ENCODE measurements at regions of chr20 and their contacts with region 1.

Region 1: GRCh38 chr20:41339507-41340326 is 904 bp upstream of the LPIN3 start:
- DNase-seq: peak; percentile 60 to 71
- ATAC-seq: peak; percentile 73 to 74
- H3K4me3 ChIP-seq: peak overlapping the region; percentile 23 to 52 (median 40)
- H3K27ac ChIP-seq: peak overlapping the region; percentile 65 to 77 (median 70)
- H3K4me1 ChIP-seq: peaks cover 6 to 8% of the 10 kb centered on the region in 2 donors
- H3K27me3 ChIP-seq: no peaks in the 10 kb centered on the region
- CTCF ChIP-seq: peak; percentile 98 to 100 (median 99)
- POLR2A ChIP-seq: no peak

Region 2: DNA sequence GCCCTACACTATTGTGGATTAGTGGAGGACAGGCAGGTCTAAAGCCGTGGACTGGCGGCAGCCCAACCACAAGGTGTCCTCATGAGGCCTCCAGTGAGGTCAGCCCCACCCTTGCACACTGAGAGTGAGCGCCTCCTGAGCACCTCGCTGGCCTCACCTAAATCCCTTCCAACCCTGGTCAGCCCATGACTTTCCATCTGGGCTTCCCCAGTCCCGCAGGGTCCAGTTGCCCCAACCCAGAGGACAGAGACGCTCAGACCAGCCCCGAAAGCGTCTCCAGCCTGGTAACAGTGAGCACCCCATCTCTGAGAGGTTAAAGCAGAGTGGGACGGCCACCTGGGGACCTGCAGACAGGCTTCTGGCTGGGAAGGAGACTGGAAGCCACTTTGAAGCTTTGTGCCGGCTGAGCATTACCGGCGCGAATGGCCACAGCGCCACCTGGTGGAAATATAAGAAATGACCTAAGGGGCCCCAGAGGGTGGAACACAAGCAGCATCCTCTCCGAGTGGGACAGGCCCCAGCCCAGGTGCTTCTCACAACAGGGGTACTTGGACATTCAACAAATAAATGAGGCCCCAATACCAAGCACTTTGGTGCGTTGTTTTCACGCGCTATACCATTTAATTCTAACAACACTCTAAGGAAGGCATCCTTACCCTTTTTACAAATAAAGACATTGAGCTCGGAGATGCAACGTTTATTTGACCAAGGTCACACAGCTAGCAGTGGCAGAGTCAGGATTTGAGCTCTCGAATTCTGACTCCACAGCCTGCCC is 376.8 kb before region 1 on chr20:
- in situ Hi-C with region 1: no loop called
- intact Hi-C with region 1: loop called (anchors 5 kb)
- DNase-seq: peak; percentile 18 to 48
- ATAC-seq: peak; percentile 73 to 92
- H3K4me3 ChIP-seq: no peak overlapping the region
- H3K27ac ChIP-seq: no peak overlapping the region
- H3K4me1 ChIP-seq: no peaks in the 10 kb centered on the region
- H3K27me3 ChIP-seq: no peaks in the 10 kb centered on the region
- CTCF ChIP-seq: peak; percentile 74 to 92 (median 83)
- POLR2A ChIP-seq: no peak

Region 3: DNA sequence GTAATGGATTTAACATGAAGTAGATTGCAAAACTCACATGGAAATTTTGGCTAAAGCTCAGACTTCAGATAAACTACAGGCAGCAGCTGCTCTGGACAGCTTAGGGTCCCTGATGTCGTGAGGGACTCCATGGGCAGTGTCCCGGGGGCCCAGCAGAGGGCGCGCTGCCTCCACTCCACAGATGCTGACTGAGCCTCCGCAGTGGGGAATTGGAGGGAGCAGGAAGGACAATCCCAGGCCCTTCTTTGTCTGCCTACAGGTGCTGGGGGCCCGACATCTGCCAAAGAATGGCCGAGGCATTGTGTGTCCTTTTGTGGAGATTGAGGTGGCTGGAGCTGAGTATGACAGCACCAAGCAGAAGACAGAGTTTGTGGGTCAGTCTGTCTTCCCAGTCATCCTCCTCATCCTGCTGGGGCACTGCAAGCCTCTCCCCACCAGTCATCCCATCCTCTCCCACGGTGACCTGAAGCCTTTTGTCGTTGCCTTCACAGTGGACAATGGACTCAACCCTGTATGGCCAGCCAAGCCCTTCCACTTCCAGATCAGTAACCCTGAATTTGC is 166.5 kb before region 1 on chr20:
- in situ Hi-C with region 1: loop called (anchors 5 kb)
- intact Hi-C with region 1: loop called (anchors 1 kb)
- DNase-seq: peak; percentile 73 to 83
- ATAC-seq: peak; percentile 85 to 88
- H3K4me3 ChIP-seq: no peak overlapping the region
- H3K27ac ChIP-seq: peak overlapping the region; percentile 68 to 80 (median 76)
- H3K4me1 ChIP-seq: peaks cover 59 to 65% of the 10 kb centered on the region in 2 donors
- H3K27me3 ChIP-seq: no peaks in the 10 kb centered on the region
- CTCF ChIP-seq: peak; percentile 96 to 98 (median 97)
- POLR2A ChIP-seq: no peak

Region 4: DNA sequence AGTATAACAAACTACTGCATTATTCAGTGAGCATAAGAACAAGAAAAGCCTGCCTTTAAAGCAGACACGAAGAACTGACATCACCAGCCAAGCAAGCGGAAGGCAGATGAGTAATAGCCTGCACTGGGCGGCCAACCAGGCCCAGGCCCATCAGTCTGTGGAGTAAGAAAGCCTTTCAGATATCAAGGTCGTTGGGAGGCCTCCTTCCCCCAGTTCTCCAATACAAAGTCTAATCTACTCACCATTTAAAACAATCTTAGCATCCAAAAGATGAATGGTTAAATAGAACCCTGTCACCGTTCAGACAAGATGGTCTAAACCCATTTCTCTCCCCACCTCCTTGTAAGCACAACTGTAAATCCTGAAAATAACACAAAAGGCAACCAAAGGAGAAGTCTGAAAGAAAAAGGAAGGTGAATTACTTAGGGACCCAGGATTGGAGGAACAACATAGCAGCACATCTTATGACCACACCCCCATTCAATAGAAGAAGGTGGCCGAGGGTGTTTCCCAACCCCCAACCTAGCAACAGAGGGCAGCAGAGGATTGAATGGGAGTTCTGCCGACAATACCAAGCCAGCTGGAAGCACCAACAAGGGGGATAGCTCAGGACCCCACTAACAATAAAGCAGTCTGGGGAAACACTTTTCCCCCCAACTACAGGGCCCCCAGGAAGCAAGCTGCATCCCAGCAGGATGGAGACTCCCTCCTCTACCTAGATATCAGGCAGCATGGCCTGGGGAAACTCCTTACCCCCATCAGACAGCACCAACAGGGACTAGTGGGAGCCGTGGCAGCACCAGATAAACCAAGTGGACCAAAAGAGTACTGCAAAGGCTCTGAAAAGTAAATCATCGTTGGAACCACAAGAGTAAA is 90.1 kb before region 1 on chr20:
- in situ Hi-C with region 1: loop called in 1 of 4 experiments (anchors 5 kb)
- intact Hi-C with region 1: loop called (anchors 1 kb)
- DNase-seq: peak; percentile 50 to 77
- ATAC-seq: peak; percentile 78 to 80
- H3K4me3 ChIP-seq: no peak overlapping the region
- H3K27ac ChIP-seq: peak overlapping the region; percentile 83 to 84 (median 84)
- H3K4me1 ChIP-seq: peaks cover 57 to 64% of the 10 kb centered on the region in 2 donors
- H3K27me3 ChIP-seq: no peaks in the 10 kb centered on the region
- CTCF ChIP-seq: peak in 4 of 5 experiments; percentile 19 to 44 (median 38)
- POLR2A ChIP-seq: no peak

Region 5: GRCh38 chr20:41411391-41411847 is 71.7 kb after region 1 on chr20:
- in situ Hi-C with region 1: no loop called
- intact Hi-C with region 1: loop called (anchors 2 kb)
- DNase-seq: no peak
- ATAC-seq: peak; percentile 55 to 78
- H3K4me3 ChIP-seq: no peak overlapping the region
- H3K27ac ChIP-seq: peak overlapping the region; percentile 65 to 81 (median 70)
- H3K4me1 ChIP-seq: peaks cover 49 to 65% of the 10 kb centered on the region in 2 donors
- H3K27me3 ChIP-seq: no peaks in the 10 kb centered on the region
- CTCF ChIP-seq: peak in 2 of 5 experiments; percentile 55 to 61
- POLR2A ChIP-seq: no peak